Activated T-helper 1 cell treated with anti-CD3 and anti-CD28 coated beads, Interleukin-12 subunit alpha, Interleukin-12 subunit beta, Interleukin-2, Interleukin-4 antibody, amounts not matched to agents 30 ng/mL and 10 ng/mL and 1 ng/mL, durations not matched to agents 14 hours and 24 hours and 36 hours (primary cell): ENCODE measurements at regions of chr4 and their contacts with region 1.

Region 1: DNA sequence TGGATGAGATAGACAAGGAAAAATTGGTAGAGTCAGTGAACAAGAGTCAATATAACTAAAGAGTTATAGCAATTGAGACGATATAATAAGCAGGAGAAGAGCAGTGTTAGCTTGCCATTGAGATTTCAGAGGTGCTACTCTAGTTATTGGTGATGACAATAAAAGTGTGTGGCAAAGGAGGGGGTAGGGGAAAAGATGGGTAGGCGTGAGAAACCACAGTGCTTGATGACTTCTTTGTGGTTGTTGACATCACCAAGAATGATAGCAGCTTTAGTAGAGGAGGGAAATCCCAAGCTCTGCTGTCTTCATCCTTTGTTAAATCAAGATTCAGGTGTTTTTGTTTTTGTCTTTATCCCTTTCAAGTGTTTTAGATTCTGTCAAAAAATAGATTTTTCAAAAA is 179.9 kb upstream of the PPP3CA start:
- DNase-seq: peak; percentile 68
- H3K4me3 Mint-ChIP-seq: peak overlapping the region; percentile 8
- H3K27ac Mint-ChIP-seq: peak overlapping the region; percentile 67
- H3K4me1 Mint-ChIP-seq: peaks cover 32% of the 10 kb centered on the region
- H3K27me3 Mint-ChIP-seq: peaks cover 26% of the 10 kb centered on the region

Region 2: GRCh38 chr4:100082852-100083251 is 1444.3 kb before region 1 on chr4:
- intact Hi-C with region 1: loop called (anchors 5 kb)
- DNase-seq: no peak
- H3K4me3 Mint-ChIP-seq: no peak overlapping the region
- H3K27ac Mint-ChIP-seq: peak overlapping the region; percentile 67
- H3K4me1 Mint-ChIP-seq: peaks cover 58% of the 10 kb centered on the region
- H3K27me3 Mint-ChIP-seq: no peaks in the 10 kb centered on the region

Region 3: DNA sequence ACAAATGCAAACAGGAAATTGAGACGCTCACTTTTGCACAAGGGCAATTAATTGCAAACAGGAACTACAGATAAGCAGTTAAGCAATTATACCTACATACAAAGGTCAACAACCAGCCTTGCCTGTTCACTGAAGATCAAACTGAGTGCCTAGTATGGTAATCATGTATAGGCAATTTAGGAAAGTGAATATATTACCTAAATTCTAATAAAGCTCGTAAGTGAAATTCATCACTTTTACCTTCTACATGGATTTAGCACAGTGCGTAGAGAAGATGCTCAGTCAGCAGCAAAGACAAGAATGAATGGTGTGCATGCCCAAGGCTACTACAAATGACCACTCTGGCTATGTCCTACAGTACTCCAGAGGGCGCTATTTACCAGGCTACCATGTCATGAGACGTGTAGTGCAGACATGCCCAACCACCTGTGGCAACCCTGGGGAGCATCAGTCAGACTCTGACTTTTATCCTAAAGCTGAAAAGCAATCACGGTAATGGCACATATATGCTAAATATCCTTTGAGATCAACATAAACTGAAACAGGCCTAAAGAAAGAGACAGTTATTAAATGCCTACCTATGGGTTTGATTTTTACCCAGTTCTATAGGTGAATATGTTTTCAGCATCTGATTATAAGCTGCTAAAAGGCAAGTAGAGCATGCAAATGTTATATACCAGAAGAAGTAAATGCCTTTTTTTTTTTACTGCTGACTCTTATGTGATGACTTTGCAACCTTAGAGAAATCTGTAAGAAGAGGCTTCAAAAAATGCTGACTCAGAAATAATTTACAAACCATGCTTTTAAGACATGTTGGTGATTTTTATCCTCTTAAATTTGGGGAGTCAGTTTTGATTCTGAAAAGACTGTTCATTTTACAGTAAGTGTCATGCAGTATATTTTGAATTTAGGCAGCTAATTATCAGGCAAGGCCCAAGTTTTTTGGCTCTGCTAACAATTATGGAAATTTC is 357.9 kb before region 1 on chr4:
- intact Hi-C with region 1: loop called (anchors 5 kb)
- DNase-seq: peak; percentile 43
- H3K4me3 Mint-ChIP-seq: no peak overlapping the region
- H3K27ac Mint-ChIP-seq: no peak overlapping the region
- H3K4me1 Mint-ChIP-seq: no peaks in the 10 kb centered on the region
- H3K27me3 Mint-ChIP-seq: peaks cover 4% of the 10 kb centered on the region

Region 4: DNA sequence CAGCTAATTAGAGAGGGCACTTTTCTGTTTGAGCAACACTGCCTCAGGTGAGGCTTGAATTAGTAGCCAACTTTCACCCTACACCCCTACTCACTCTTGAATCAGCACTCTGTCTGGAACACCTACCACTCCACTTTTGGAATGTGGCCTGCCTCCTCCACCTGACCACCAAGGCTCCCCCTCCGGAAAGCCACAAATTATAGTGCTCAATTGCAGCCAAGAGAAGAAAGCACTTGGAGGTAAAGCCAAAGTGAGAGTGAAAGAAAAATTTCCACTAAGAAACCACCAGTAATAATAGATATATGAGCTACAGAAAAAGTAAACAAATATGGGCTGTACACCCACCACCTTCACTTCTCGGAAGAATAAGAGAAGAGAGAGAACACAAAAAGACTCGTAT is 221.0 kb before region 1 on chr4:
- intact Hi-C with region 1: loop called (anchors 5 kb)
- DNase-seq: no peak
- H3K4me3 Mint-ChIP-seq: no peak overlapping the region
- H3K27ac Mint-ChIP-seq: no peak overlapping the region
- H3K4me1 Mint-ChIP-seq: peaks cover 12% of the 10 kb centered on the region
- H3K27me3 Mint-ChIP-seq: peaks cover 9% of the 10 kb centered on the region

Region 5: GRCh38 chr4:101400096-101400495 is 127.1 kb before region 1 on chr4:
- intact Hi-C with region 1: loop called (anchors 5 kb)
- DNase-seq: peak; percentile 12
- H3K4me3 Mint-ChIP-seq: peak overlapping the region; percentile 2
- H3K27ac Mint-ChIP-seq: peak overlapping the region; percentile 71
- H3K4me1 Mint-ChIP-seq: peaks cover 22% of the 10 kb centered on the region
- H3K27me3 Mint-ChIP-seq: peaks cover 6% of the 10 kb centered on the region

Region 6: GRCh38 chr4:102390438-102390837 is 863.2 kb after region 1 on chr4:
- intact Hi-C with region 1: loop called (anchors 5 kb)
- DNase-seq: no peak
- H3K4me3 Mint-ChIP-seq: no peak overlapping the region
- H3K27ac Mint-ChIP-seq: peak overlapping the region; percentile 58
- H3K4me1 Mint-ChIP-seq: peaks cover 20% of the 10 kb centered on the region
- H3K27me3 Mint-ChIP-seq: peaks cover 7% of the 10 kb centered on the region